CD4-positive, alpha-beta T cell (primary cell): ENCODE measurements at regions of chr10 and their contacts with region 1.

Region 1: DNA sequence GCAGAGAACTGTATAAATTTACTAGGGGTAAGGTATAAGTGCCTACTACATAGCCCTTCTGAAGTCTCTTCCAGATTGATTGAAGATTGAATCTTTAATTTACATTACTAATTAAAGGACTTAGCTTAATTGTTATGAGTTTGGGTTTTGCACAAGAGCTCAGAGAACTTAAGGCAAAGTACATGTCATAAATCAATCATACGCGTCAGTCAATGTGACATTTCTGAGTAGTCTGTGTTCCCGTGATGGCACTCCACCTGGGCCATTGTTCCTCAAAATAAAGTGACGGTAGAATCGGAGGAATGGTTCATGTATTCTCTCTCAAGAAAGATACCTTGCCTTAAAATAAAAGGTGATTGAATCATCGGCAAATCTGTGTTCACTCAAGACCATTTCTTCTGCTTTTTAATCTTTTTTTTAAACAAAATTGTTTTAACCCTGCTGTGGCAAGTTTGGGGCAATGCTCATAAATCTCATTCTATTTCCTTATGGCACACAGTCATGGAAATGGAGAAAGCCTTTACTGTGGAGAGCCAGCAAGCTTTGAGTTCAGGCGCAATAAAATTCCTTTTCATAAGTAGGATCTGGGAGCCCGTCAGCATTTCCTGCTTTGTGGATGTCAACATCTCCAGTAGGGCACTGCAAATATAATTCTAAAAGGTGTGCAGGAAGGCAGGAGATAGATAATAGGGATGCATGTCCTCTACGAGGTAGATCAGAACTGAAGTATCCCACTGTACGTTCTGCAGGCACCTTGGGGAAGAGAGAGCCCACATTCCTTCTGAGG is 427.4 kb downstream of the GATA3 start:
- DNase-seq: no peak
- ATAC-seq: no peak
- H3K4me3 ChIP-seq: no peak overlapping the region
- H3K4me3 Mint-ChIP-seq: no peak overlapping the region
- H3K27ac ChIP-seq: no peak overlapping the region
- H3K27ac Mint-ChIP-seq: no peak overlapping the region
- H3K4me1 ChIP-seq: no peaks in the 10 kb centered on the region
- H3K4me1 Mint-ChIP-seq: no peaks in the 10 kb centered on the region
- H3K27me3 ChIP-seq: peaks cover 11% of the 10 kb centered on the region in 2 experiments
- H3K27me3 Mint-ChIP-seq: peaks cover 50% of the 10 kb centered on the region
- CTCF ChIP-seq: no peak

Region 2: DNA sequence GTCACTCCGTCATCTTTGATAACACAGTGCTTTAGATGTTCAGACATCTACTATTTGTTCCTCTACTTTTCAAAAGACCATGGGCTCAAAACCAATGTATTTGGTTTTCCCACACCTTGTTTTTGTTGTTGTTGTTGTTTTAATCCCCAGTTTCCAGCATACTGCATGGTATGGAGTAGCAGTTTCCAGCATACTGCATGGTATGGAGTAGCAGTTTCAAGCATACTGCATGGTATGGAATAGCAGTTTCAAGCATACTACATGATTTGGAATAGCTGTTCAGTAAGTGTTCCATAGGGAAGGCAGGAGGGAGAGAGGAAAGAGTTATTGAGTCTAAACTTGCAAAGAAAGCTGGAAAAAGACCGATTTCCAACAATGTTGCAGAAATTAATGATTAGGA is 1587.5 kb before region 1 on chr10:
- CTCF ChIA-PET with region 1: no interaction called
- POLR2A ChIA-PET with region 1: no interaction called
- intact Hi-C with region 1: loop called in 1 of 2 experiments (anchors 5 kb)
- DNase-seq: no peak
- ATAC-seq: no peak
- H3K4me3 ChIP-seq: no peak overlapping the region
- H3K4me3 Mint-ChIP-seq: no peak overlapping the region
- H3K27ac ChIP-seq: no peak overlapping the region
- H3K27ac Mint-ChIP-seq: no peak overlapping the region
- H3K4me1 ChIP-seq: no peaks in the 10 kb centered on the region
- H3K4me1 Mint-ChIP-seq: no peaks in the 10 kb centered on the region
- H3K27me3 ChIP-seq: no peaks in the 10 kb centered on the region
- H3K27me3 Mint-ChIP-seq: peaks cover 8% of the 10 kb centered on the region
- CTCF ChIP-seq: no peak

Region 3: DNA sequence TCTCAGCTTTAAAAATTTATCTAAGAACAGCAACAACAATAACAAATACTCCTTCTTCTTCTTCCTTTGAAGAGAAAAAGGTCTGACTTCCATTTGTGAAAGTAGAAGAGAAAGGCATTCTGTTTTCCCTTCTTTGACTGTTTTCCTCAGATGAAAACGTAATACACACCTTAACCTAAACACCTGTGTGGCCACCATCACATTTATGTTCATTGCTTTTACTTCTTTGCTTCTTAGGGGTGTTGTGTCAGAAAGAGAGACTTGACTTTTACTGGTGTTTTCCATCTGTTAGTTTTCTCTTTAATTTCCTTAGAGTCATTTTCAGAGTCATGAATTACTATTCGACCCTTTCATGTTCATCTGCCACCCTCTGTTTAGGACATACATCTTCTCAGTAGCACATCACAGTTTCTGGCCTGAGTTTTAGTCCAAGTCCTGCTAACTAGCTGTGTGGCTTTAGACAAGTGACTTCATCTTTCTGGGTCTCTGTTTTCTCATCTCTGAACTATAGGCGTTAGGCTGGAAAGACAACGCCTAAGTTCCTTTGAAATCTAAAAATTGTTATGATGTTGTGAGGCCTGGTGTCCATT is 143.6 kb before region 1 on chr10:
- CTCF ChIA-PET with region 1: no interaction called
- POLR2A ChIA-PET with region 1: no interaction called
- intact Hi-C with region 1: no loop called
- DNase-seq: no peak
- ATAC-seq: no peak
- H3K4me3 ChIP-seq: no peak overlapping the region
- H3K4me3 Mint-ChIP-seq: no peak overlapping the region
- H3K27ac ChIP-seq: no peak overlapping the region
- H3K27ac Mint-ChIP-seq: peak overlapping the region; percentile 27
- H3K4me1 ChIP-seq: no peaks in the 10 kb centered on the region
- H3K4me1 Mint-ChIP-seq: peaks cover 5% of the 10 kb centered on the region
- H3K27me3 ChIP-seq: no peaks in the 10 kb centered on the region
- H3K27me3 Mint-ChIP-seq: no peaks in the 10 kb centered on the region
- CTCF ChIP-seq: no peak

Region 4: DNA sequence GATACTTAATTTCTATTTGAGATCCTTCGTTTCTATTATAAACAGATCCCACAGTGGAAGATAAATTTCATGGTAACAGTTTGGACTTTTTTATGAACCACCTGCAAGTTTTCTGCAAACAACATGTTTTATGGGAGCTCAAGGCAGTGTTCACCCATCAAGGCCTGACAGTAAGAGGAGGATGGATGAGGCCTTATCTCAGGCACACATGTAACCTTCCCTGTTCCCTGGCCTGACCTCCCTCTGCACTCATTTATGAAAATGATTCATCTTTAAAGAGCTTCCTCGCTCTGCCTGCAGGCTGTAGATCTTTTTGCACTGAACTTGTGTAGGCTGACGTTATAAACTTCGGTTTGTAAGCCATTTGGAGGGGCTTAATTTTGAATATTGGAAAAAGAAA is 72.7 kb after region 1 on chr10:
- CTCF ChIA-PET with region 1: no interaction called
- POLR2A ChIA-PET with region 1: no interaction called
- intact Hi-C with region 1: no loop called
- DNase-seq: no peak
- ATAC-seq: no peak
- H3K4me3 ChIP-seq: no peak overlapping the region
- H3K4me3 Mint-ChIP-seq: no peak overlapping the region
- H3K27ac ChIP-seq: no peak overlapping the region
- H3K27ac Mint-ChIP-seq: no peak overlapping the region
- H3K4me1 ChIP-seq: no peaks in the 10 kb centered on the region
- H3K4me1 Mint-ChIP-seq: no peaks in the 10 kb centered on the region
- H3K27me3 ChIP-seq: no peaks in the 10 kb centered on the region
- H3K27me3 Mint-ChIP-seq: peaks cover 16% of the 10 kb centered on the region
- CTCF ChIP-seq: no peak